OCI-LY7 (cell line): ENCODE measurements at regions of chr14 and their contacts with region 1.

Region 1: DNA sequence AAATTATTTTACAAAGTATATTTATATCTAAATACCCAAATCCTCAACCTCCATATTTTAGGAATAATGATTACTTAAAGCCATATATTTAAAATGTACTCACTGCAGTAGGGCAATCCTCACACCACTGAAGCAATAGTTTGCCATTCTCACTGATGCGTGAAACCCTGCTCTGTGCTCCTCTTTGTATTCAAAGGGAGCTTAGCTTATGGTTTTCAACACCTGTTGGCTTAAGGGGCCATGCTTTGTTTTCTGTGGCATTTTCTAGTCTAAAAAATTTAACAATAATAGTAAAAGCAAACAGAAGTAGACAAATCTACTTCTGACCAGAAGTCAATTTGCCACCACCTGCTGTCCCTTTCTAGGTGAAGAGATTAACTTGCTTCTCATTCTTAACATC is 294.6 kb downstream of the FLRT2 start:
- DNase-seq: no peak
- H3K4me3 ChIP-seq: no peak overlapping the region
- H3K27ac ChIP-seq: no peak overlapping the region
- H3K4me1 ChIP-seq: no peaks in the 10 kb centered on the region
- CTCF ChIP-seq: no peak

Region 2: DNA sequence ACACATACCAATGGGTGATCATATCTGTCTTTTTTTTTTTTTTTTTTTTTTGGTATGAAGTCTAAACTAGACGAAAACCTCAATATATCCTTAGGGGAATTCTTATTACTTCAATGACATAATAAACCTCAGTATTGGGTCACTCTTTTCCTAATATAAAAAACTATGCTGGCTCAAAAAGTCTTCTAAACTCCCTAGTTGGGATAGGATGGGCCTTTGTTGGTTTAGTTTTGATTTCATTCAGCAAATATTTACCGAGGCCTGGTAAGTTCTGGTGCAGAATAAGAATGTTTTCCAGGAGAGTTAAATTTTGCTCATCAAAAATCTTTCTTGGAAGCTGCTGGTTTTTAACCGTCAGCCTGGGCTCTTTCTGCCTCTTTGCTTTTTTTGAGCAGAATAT is 194.3 kb before region 1 on chr14:
- CTCF ChIA-PET with region 1: no interaction called
- POLR2A ChIA-PET with region 1: interaction called, 10 read pairs
- intact Hi-C with region 1: no loop called
- DNase-seq: no peak
- H3K4me3 ChIP-seq: no peak overlapping the region
- H3K27ac ChIP-seq: no peak overlapping the region
- H3K4me1 ChIP-seq: no peaks in the 10 kb centered on the region
- CTCF ChIP-seq: no peak